ENCODE measurements at regions of chr10 and their contacts with region 1.

Region 1: GRCh38 chr10:30639946-30640786 is 10.6 kb upstream of the LYZL2 start:
- DNase-seq: peak; percentile 63
- ATAC-seq: peak; percentile 16; the same call in 1 of the 2 replicates
- H3K4me3 ChIP-seq: no peak overlapping the region
- H3K27ac ChIP-seq: no peak overlapping the region
- H3K4me1 ChIP-seq: peaks cover 8% of the 10 kb centered on the region
- H3K27me3 ChIP-seq: no peaks in the 10 kb centered on the region
- CTCF ChIP-seq: peak; percentile 72

Region 2: GRCh38 chr10:30608386-30608785 is 31.8 kb before region 1 on chr10:
- CTCF ChIA-PET with region 1: no interaction called
- POLR2A ChIA-PET with region 1: no interaction called
- intact Hi-C with region 1: no loop called
- DNase-seq: no peak
- ATAC-seq: no peak
- H3K4me3 ChIP-seq: no peak overlapping the region
- H3K27ac ChIP-seq: no peak overlapping the region
- H3K4me1 ChIP-seq: peaks cover 11% of the 10 kb centered on the region
- H3K27me3 ChIP-seq: no peaks in the 10 kb centered on the region
- CTCF ChIP-seq: no peak

Region 3: DNA sequence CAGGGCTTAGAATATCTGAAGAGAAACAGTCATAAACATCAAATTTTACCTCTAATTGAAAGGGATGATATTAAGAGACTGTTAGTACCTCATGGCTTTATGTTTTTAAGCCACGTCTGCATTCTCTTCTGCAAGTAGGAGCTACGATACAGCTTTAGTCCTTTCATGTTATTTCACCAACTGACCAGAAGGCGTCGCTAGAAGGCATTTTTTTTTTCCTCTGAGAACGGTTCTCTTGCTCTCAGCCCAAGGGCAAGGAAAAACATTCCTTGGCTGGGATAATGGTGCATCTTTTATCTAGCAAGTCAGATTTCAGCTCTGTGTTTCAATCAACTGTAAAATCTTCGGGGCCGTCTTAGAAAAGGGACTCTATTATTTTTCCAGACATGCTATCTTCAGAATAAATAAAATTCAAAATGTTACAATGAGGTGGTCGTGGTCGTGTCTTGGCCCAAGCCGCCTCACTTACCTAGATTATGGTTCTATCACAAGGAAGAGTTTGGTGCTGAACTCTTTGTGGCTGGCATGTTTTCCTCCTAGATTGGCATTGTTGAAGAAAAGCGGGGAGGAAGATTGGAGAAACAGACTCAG is 31.0 kb after region 1 on chr10:
- CTCF ChIA-PET with region 1: interaction called, 15 read pairs
- POLR2A ChIA-PET with region 1: no interaction called
- intact Hi-C with region 1: no loop called
- DNase-seq: peak; percentile 76
- ATAC-seq: peak; percentile 79
- H3K4me3 ChIP-seq: peak overlapping the region; percentile 65
- H3K27ac ChIP-seq: no peak overlapping the region
- H3K4me1 ChIP-seq: peaks cover 14% of the 10 kb centered on the region
- H3K27me3 ChIP-seq: no peaks in the 10 kb centered on the region
- CTCF ChIP-seq: peak; percentile 62